Calu3 (cell line): ENCODE measurements at regions of chr14 and their contacts with region 1.

Region 1: GRCh38 chr14:32259368-32260013 is 56.4 kb upstream of the RNU6-8 start:
- DNase-seq: peak; percentile 37
- H3K4me3 Mint-ChIP-seq: no peak overlapping the region
- H3K27ac Mint-ChIP-seq: no peak overlapping the region
- H3K4me1 Mint-ChIP-seq: peaks cover 21% of the 10 kb centered on the region
- H3K27me3 Mint-ChIP-seq: no peaks in the 10 kb centered on the region
- CTCF ChIP-seq: no peak

Region 2: DNA sequence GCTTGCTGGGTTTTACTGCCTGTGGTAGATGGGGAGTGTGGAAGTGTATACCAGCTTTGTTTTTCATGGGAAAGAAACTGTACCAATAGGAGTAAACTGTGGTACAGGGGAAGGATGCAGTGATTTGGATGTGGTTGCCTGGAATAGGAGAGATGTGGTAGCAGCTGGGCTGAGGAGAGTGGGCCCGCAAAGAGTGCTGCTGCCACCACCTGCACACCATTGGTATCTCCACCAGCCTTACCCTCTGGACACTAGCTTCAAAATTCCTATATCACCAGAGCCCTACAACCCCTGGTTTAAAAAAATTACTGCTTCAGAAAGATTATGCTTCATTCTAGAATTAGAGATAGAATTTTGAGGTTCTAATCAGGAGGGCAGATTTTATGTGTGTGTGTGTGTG is 123.2 kb after region 1 on chr14:
- CTCF ChIA-PET with region 1: interaction called, 10 read pairs
- intact Hi-C with region 1: loop called (anchors 1 kb)
- DNase-seq: peak; percentile 61
- H3K4me3 Mint-ChIP-seq: no peak overlapping the region
- H3K27ac Mint-ChIP-seq: no peak overlapping the region
- H3K4me1 Mint-ChIP-seq: peaks cover 45% of the 10 kb centered on the region
- H3K27me3 Mint-ChIP-seq: no peaks in the 10 kb centered on the region
- CTCF ChIP-seq: peak; percentile 46

Region 3: DNA sequence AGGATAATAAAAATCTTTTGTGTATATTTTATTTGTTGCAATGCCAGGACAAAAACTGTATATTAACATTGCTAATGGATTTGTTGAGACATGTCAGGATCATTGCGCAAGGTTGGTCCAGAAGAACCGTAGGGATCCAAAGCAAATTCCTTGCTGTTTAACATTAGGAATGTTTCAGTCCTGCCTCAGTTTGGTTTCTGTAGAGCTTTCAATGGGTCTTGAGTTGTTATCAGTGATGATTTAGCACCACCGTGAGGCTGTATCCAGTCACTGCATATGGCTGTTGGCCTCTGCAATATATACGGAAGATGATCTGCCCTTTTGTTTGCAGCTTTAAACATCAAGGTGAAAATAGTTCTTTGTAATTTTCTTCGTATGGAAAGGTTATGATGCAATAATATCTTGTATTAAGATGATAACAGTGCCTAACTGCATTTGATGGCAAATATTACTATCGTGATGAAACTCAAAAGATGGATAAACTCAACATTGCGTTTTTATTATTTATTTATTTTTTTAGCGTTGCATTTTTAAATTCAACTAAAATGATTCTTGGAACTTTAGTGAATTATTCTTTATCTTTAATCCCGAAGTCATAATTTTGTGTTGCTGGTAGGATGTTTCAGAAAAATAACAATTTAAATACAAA is 300.8 kb after region 1 on chr14:
- CTCF ChIA-PET with region 1: interaction called, 6 read pairs
- intact Hi-C with region 1: loop called (anchors 2 kb)
- DNase-seq: peak; percentile 64
- H3K4me3 Mint-ChIP-seq: no peak overlapping the region
- H3K27ac Mint-ChIP-seq: no peak overlapping the region
- H3K4me1 Mint-ChIP-seq: no peaks in the 10 kb centered on the region
- H3K27me3 Mint-ChIP-seq: no peaks in the 10 kb centered on the region
- CTCF ChIP-seq: peak; percentile 75